ENCODE measurements at regions of chr18 and their contacts with region 1.

Region 1: DNA sequence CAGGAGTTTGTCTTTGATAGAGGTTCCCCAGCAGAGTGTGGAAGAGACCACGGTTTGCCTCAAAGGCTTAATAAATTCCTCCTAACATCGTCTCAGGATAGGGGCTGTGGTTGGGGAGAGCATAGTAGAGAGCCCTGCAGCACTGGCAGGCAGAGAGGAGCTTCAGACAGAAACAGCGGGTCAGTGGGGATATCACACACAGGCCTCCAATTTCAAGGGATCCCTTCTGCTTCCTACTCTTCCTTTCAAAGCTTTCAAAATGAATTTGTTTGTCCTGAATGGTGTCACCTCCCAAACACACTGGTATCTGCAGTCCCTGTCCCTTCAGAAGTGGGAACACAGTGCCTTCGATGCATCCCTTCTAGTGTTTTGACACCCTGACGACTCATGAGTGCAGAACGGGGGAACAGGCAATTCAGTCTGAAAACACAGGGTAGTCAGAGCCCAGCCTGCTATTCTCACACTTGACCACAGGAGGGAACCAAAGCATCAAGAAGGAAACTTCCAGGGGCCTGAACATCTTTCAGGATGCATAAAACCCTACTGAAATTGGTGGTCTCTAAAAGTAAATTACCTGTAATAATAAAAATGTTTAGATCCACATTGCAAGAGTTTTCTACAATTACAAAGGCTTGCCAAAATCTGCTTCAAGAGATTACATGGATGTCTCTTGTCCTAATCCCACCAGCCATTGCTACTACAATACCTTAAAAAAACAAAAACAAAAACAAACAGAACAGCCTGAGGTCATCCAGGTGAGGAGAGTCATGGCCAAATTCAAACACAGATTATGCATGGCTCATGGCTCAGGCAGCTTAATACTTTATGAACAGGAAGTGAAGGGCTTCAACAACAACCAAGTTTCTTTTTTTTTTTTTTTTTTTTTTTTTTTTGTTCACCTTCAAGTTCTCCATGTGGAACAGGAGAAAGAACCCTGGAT is 49.8 kb downstream of the SLC14A2 start:
- DNase-seq: peak; percentile 35 to 76 (median 63)
- ATAC-seq: peak; percentile 86
- H3K4me3 ChIP-seq: no peak overlapping the region
- H3K4me3 Mint-ChIP-seq: peak overlapping the region; percentile 1 to 87 (median 62)
- H3K27ac ChIP-seq: no peak overlapping the region
- H3K27ac Mint-ChIP-seq: peak overlapping the region; percentile 8 to 91 (median 50)
- H3K4me1 ChIP-seq: peaks cover 41 to 49% of the 10 kb centered on the region in 2 donors
- H3K4me1 Mint-ChIP-seq: peaks cover 38 to 67% (median 53%) of the 10 kb centered on the region in 7 donors
- H3K27me3 ChIP-seq: no peaks in the 10 kb centered on the region
- H3K27me3 Mint-ChIP-seq: peaks cover 0 to 20% (median 0%) of the 10 kb centered on the region in 5 donors

Region 2: DNA sequence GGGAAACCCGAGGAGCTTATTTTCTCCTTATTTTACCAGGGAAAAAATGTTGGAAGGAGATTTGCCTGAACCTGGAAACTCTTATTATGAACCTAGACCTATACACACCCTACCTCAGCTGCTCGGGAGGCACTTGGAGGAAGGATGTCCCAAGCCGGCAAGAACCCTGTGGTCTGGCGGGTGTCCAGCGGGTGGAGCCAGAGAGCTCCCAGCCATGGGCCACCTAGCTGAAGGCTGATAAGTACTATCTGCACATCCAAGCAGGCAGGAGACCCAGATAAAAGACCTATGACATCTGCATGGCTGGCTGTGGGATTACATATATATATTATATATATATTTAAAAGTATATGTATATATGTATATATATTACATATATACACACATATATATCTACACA is 57.8 kb after region 1 on chr18:
- CTCF ChIA-PET with region 1: no interaction called
- POLR2A ChIA-PET with region 1: no interaction called
- intact Hi-C with region 1: loop called (anchors 2 kb)
- DNase-seq: peak in 8 of 9 donors; percentile 7 to 74 (median 40)
- ATAC-seq: peak; percentile 90
- H3K4me3 ChIP-seq: no peak overlapping the region
- H3K4me3 Mint-ChIP-seq: no peak overlapping the region
- H3K27ac ChIP-seq: no peak overlapping the region
- H3K27ac Mint-ChIP-seq: no peak overlapping the region
- H3K4me1 ChIP-seq: no peaks in the 10 kb centered on the region
- H3K4me1 Mint-ChIP-seq: peaks cover 0 to 15% (median 0%) of the 10 kb centered on the region in 7 donors
- H3K27me3 ChIP-seq: no peaks in the 10 kb centered on the region
- H3K27me3 Mint-ChIP-seq: peaks cover 0 to 35% (median 0%) of the 10 kb centered on the region in 5 donors

Region 3: GRCh38 chr18:45839414-45840395 is 174.6 kb after region 1 on chr18:
- CTCF ChIA-PET with region 1: interaction called, 16 read pairs
- POLR2A ChIA-PET with region 1: interaction called, 3 read pairs
- intact Hi-C with region 1: loop called (anchors 1 to 2 kb)
- DNase-seq: peak in 4 of 9 donors; percentile 20 to 36 (median 34)
- ATAC-seq: peak; percentile 62
- H3K4me3 ChIP-seq: no peak overlapping the region
- H3K4me3 Mint-ChIP-seq: peak overlapping the region in 5 of 10 donors; percentile 32 to 48 (median 36)
- H3K27ac ChIP-seq: no peak overlapping the region
- H3K27ac Mint-ChIP-seq: no peak overlapping the region
- H3K4me1 ChIP-seq: no peaks in the 10 kb centered on the region
- H3K4me1 Mint-ChIP-seq: peaks cover 5 to 21% (median 10%) of the 10 kb centered on the region in 7 donors
- H3K27me3 ChIP-seq: peaks cover 0 to 4% of the 10 kb centered on the region in 2 donors
- H3K27me3 Mint-ChIP-seq: peaks cover 30 to 56% (median 40%) of the 10 kb centered on the region in 5 donors

Region 4: GRCh38 chr18:45910405-45911023 is 245.4 kb after region 1 on chr18:
- CTCF ChIA-PET with region 1: interaction called, 32 read pairs
- POLR2A ChIA-PET with region 1: no interaction called
- intact Hi-C with region 1: loop called (anchors 1 kb)
- DNase-seq: peak; percentile 16 to 68 (median 57)
- ATAC-seq: peak; percentile 83
- H3K4me3 ChIP-seq: no peak overlapping the region
- H3K4me3 Mint-ChIP-seq: no peak overlapping the region
- H3K27ac ChIP-seq: no peak overlapping the region
- H3K27ac Mint-ChIP-seq: no peak overlapping the region
- H3K4me1 ChIP-seq: no peaks in the 10 kb centered on the region
- H3K4me1 Mint-ChIP-seq: peaks cover 0 to 5% (median 2%) of the 10 kb centered on the region in 7 donors
- H3K27me3 ChIP-seq: no peaks in the 10 kb centered on the region
- H3K27me3 Mint-ChIP-seq: no peaks in the 10 kb centered on the region

Region 5: GRCh38 chr18:45974088-45974536 is 309.0 kb after region 1 on chr18:
- CTCF ChIA-PET with region 1: interaction called, 3 read pairs
- POLR2A ChIA-PET with region 1: no interaction called
- intact Hi-C with region 1: loop called (anchors 1 kb)
- DNase-seq: peak in 8 of 9 donors; percentile 36 to 68 (median 60)
- ATAC-seq: peak; percentile 94
- H3K4me3 ChIP-seq: no peak overlapping the region
- H3K4me3 Mint-ChIP-seq: peak overlapping the region in 4 of 10 donors; percentile 3 to 35 (median 12)
- H3K27ac ChIP-seq: no peak overlapping the region
- H3K27ac Mint-ChIP-seq: peak overlapping the region in 3 of 9 donors; percentile 13 to 77 (median 56)
- H3K4me1 ChIP-seq: peaks cover 0 to 6% of the 10 kb centered on the region in 2 donors
- H3K4me1 Mint-ChIP-seq: peaks cover 0 to 9% (median 7%) of the 10 kb centered on the region in 7 donors
- H3K27me3 ChIP-seq: no peaks in the 10 kb centered on the region
- H3K27me3 Mint-ChIP-seq: no peaks in the 10 kb centered on the region